Activated CD4-positive, alpha-beta T cell treated with anti-CD3 and anti-CD28 coated beads, Interleukin-2, amount 10 ng/mL, durations not matched to agents 24 days and 14 days (primary cell): ENCODE measurements at regions of chr6 and their contacts with region 1.

Region 1: DNA sequence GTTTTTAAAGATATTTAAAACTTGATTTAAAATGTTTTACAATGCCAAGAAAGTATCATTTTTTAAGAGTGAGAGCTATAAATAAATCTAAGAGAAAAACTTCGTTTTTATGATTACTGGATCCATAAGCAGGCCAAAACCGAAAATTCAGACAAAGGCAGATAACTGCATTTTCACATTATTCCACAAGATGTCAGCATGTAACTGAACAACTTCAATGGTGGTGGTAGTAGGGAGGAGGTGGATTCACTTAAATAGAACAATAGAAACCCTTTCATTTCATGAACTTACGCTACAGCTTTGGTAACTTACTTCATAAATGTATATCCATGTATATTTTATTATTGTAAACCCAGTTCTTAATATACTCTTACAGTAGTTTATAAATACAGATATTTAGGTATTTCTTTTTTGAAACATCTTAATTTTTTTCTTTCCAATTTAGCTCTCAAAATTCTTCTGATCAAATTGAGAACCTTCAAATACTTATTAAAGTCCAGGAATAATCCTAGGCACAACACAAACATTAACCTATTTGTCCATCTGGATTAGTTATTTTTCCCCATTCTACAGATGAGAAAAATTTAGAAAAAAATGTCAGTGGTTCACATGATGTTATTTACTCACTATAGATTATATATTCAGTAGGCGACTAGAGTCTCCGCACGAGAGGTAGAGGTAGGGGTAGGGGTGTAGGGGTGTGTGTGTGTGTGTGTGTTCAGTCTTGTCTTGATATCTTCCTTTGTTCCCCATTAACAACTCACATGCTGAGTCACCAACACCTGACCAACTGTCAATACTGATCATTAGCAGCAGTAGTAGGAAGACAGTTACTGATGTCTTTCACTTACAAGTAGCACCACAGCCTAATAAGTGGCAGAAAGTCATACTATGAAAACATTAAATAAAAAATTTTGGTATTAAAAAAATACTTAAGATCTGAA is 111.5 kb downstream of the ARHGAP18 start:
- DNase-seq: peak; percentile 84
- H3K4me3 Mint-ChIP-seq: no peak overlapping the region
- H3K27ac Mint-ChIP-seq: no peak overlapping the region
- H3K4me1 Mint-ChIP-seq: peaks cover 1% of the 10 kb centered on the region
- H3K27me3 Mint-ChIP-seq: no peaks in the 10 kb centered on the region

Region 2: DNA sequence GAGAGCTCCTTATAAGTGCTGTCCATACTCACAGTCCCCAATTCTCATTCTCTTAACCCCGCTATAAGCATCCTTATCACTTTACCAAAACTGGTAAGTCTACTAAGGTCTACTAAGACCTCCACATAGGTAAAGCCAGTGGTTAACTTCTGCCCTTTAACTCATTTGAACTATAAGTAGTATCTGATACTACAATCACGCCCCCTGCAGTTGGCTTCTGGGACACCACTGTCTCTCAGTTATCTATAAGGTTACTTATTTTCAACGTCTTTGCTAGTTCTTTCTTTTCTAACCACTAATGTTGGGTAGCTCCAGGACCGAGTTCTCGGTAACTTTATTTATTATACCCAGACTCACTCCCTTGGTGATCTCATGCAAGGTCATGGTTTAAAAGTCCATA is 31.1 kb before region 1 on chr6:
- intact Hi-C with region 1: no loop called
- DNase-seq: peak; percentile 77
- H3K4me3 Mint-ChIP-seq: no peak overlapping the region
- H3K27ac Mint-ChIP-seq: no peak overlapping the region
- H3K4me1 Mint-ChIP-seq: no peaks in the 10 kb centered on the region
- H3K27me3 Mint-ChIP-seq: peaks cover 6% of the 10 kb centered on the region

Region 3: DNA sequence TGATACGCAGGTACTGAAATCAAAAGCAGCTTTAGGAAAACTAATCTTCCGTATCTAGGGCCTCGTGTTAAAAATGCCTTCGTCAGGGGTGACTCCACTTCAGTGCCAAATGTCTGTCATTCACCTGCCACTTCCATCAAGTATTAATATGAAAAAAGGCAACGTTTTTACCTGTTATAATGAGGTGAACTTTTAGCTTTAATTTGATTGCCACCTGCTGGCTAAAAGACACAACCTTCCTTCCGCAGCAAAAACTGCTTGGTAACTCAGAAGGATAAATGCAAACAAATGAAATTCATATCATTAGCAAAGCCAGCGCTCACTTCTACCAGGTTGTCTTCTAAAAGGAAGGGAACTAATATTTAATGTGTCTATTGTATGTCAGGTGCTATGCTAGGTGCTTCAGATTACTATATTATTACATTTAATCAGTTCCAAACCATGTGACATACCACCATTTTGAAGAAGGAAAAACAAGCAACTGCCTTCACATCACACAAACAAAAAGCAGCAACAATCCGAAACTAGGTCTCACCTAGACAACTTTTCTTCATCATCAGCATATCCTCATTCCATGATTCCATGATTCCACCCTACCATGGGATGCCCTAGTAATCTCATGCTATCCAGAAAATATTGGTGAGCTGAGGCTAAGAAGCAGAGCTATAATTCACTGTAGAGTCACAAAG is 132.1 kb after region 1 on chr6:
- intact Hi-C with region 1: loop called (anchors 1 kb)
- DNase-seq: peak; percentile 80
- H3K4me3 Mint-ChIP-seq: no peak overlapping the region
- H3K27ac Mint-ChIP-seq: no peak overlapping the region
- H3K4me1 Mint-ChIP-seq: peaks cover 12% of the 10 kb centered on the region
- H3K27me3 Mint-ChIP-seq: no peaks in the 10 kb centered on the region

Region 4: GRCh38 chr6:129936329-129937165 is 338.0 kb after region 1 on chr6:
- intact Hi-C with region 1: loop called (anchors 1 kb)
- DNase-seq: peak; percentile 78
- H3K4me3 Mint-ChIP-seq: no peak overlapping the region
- H3K27ac Mint-ChIP-seq: no peak overlapping the region
- H3K4me1 Mint-ChIP-seq: no peaks in the 10 kb centered on the region
- H3K27me3 Mint-ChIP-seq: peaks cover 30% of the 10 kb centered on the region